ENCODE measurements at regions of chr2 and their contacts with region 1.

Region 1: GRCh38 chr2:190511104-190511503 is 23.4 kb downstream of the NEMP2 start:
- DNase-seq: no peak
- H3K4me3 ChIP-seq: no peak overlapping the region
- H3K27ac ChIP-seq: no peak overlapping the region
- H3K4me1 ChIP-seq: no peaks in the 10 kb centered on the region
- H3K27me3 ChIP-seq: no peaks in the 10 kb centered on the region
- CTCF ChIP-seq: peak in 3 of 4 experiments; percentile 26 to 74 (median 39)
- POLR2A ChIP-seq: no peak

Region 2: DNA sequence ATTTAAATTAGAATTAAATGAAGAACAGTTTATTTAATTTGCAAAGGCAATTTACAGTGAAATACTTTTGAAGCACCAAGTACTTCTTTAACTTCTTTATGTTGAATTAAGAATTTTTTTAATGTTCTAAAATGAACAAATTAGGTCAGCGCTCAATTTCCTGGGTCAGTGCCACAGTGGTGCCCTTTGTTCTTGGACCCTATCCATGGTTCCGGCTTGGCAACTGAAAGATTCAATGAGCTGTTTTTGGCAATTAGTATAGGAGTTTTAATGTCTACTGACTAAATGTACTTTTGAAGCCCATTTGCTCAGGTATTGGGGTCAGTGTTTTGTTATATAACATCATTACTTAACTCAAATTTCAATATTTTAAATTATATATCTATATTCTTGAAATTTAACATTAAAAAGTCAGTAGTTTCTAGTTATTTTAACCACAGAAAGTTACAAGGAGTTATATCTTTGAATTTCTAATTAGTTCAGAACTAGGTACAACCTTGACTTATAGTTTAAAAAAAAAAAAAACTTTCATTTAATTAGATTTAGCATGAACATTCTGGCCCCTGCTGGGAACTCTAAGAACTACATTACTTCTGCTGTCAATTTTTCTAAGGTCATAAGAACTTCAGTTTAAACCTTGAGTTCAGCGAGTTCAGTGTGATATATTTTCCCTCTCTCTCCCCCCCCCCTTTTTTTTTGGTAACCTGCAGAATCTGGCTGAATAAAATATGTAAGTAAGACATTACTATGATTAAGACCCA is 441.0 kb before region 1 on chr2:
- intact Hi-C with region 1: no loop called
- DNase-seq: peak; percentile 43
- H3K4me3 ChIP-seq: no peak overlapping the region
- H3K27ac ChIP-seq: no peak overlapping the region
- H3K4me1 ChIP-seq: no peaks in the 10 kb centered on the region
- H3K27me3 ChIP-seq: no peaks in the 10 kb centered on the region
- CTCF ChIP-seq: peak; percentile 42 to 79 (median 52)
- POLR2A ChIP-seq: no peak

Region 3: GRCh38 chr2:190180313-190181122 is 330.6 kb before region 1 on chr2:
- intact Hi-C with region 1: no loop called
- DNase-seq: peak; percentile 35
- H3K4me3 ChIP-seq: peak overlapping the region; percentile 46 to 49
- H3K27ac ChIP-seq: peak overlapping the region; percentile 76 to 80
- H3K4me1 ChIP-seq: peaks cover 4% of the 10 kb centered on the region
- H3K27me3 ChIP-seq: no peaks in the 10 kb centered on the region
- CTCF ChIP-seq: peak in 3 of 4 experiments; percentile 32 to 61 (median 51)
- POLR2A ChIP-seq: no peak

Region 4: DNA sequence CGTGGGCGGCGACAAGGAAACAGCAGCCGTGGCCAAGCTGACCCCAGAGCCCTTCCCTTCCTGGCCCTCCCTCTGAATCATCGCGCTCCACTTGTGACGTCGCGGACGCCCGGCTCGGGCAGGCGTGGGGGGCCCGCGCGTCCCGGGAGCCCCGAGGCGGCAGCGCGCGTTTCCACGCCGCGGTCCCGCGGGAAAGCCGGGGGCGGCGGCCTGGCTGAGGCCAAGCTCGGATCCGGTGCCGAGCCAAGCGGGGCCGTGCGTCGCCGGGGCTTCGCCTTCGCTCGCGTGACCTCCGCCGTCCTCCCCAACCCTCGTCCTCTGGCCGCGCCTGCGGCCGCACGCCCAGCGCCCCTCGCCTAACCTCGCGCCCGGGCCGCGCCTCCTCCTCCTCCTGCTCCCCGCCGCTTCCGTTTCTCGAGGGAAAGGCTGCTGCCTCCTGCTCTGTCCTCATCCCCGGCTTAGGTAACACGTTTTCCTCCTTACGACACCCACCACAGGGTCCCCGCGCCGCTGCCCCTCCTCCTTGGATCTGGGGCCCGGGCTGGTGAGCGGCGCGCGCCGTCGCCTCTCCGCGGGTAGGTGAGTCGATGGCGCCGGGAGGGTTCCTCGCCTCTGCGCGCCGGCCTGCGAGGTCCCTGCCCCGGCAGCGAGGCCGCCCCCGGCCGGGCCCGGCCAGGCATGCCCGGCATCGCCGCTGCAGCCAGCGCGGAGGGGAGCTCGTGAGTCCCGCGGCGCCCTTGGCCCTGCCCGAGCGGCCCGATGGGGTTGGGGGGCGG is 167.4 kb before region 1 on chr2 and contains the start of gene INPP1:
- intact Hi-C with region 1: loop called (anchors 5 kb)
- DNase-seq: peak; percentile 25
- H3K4me3 ChIP-seq: peak within 1 kb of the TSS; percentile 66 to 72
- H3K27ac ChIP-seq: peak within 1 kb of the TSS; percentile 87 to 89
- H3K4me1 ChIP-seq: no peaks in the 10 kb centered on the region
- H3K27me3 ChIP-seq: no peaks in the 10 kb centered on the region
- CTCF ChIP-seq: no peak
- POLR2A ChIP-seq: peak; percentile 79
- total RNA-seq, gene INPP1: 13.0 to 34.4 TPM

Region 5: GRCh38 chr2:190382851-190383250 is 128.3 kb before region 1 on chr2:
- intact Hi-C with region 1: loop called (anchors 5 kb)
- DNase-seq: peak; percentile 64
- H3K4me3 ChIP-seq: no peak overlapping the region
- H3K27ac ChIP-seq: no peak overlapping the region
- H3K4me1 ChIP-seq: no peaks in the 10 kb centered on the region
- H3K27me3 ChIP-seq: no peaks in the 10 kb centered on the region
- CTCF ChIP-seq: peak; percentile 27 to 78 (median 60)
- POLR2A ChIP-seq: no peak

Region 6: DNA sequence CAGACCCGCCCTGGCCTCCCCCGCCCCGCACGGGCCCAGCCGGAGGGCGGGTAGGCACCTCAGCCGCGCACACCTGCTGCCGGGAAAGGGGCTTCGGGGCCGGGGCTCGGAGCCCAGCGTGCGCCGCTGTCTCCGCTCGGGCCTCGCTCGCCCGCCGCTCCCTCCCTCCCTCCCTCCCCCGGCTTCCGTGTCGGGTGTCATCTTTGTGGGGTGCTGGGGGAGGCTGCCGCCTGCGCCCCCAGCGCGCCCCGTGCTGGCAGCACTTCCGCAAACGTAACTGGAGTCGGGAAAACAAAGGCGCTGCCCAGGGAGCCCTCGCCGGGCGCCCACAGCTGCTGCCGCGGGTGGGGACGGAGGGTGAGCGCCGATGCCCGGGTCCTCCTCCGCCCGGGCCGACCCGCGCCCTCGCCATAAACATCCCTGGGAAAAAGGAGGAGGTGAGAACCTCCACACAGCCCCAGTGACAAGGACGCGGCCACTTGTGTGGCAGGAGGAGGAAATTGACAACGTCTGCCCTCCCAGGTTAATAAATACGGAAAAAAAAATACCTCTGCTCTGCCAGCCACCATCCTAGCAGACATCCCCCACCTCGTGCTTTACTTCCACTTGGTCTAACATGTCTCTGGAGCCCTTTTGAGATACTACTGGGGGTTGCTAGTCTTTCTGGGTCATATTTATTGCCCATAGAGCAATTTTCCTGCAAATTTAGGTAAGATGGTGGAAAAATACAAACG is 102.4 kb before region 1 on chr2:
- intact Hi-C with region 1: loop called (anchors 10 kb)
- DNase-seq: peak; percentile 65
- H3K4me3 ChIP-seq: peak overlapping the region; percentile 82 to 89
- H3K27ac ChIP-seq: peak overlapping the region; percentile 92
- H3K4me1 ChIP-seq: peaks cover 4% of the 10 kb centered on the region
- H3K27me3 ChIP-seq: no peaks in the 10 kb centered on the region
- CTCF ChIP-seq: no peak
- POLR2A ChIP-seq: peak; percentile 68

Measured in prostate gland (tissue), 2 donors.